ENCODE measurements at regions of chr5 and their contacts with region 1.

Region 1: GRCh38 chr5:32249646-32250045 is 63.1 kb downstream of the MTMR12 start:
- DNase-seq: no peak
- H3K4me3 Mint-ChIP-seq: no peak overlapping the region
- H3K27ac Mint-ChIP-seq: no peak overlapping the region
- H3K4me1 Mint-ChIP-seq: no peaks in the 10 kb centered on the region
- H3K27me3 Mint-ChIP-seq: no peaks in the 10 kb centered on the region

Region 2: DNA sequence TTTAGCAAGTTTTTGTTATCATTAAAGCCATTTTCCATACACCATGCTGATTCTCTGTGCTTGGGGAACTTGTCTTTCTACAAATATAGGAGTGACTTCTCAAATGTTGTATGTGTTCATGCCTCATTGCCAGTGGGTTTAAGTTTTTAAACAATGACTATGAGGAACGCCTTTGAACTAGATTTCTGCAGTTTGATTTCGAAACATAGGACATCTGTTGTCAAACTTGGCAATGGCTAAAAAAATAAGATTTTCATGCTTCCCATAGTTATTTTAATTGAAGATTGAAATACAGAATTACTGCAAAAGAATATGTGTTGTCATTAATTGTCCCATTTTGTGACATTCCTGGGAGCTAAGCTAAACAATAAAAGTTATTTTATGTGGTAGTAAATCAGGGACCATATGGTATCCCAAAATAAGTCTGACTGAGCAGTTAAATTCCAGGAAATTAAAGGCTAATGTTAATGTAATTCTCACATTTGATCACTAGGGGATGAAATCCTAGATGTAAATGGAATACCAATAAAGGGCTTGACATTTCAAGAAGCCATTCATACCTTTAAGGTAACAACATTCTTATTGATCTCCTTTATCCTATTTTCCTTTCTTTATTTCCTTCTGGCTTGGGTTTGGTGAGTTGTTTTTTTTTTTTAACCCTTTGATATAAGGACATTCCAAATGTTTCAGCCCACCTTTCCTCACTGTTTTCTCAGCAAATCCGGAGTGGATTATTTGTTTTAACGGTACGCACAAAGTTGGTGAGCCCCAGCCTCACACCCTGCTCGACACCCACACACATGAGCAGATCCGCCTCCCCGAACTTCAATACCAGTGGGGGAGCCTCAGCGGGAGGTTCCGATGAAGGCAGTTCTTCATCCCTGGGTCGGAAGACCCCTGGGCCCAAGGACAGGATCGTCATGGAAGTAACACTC is 192.2 kb before region 1 on chr5:
- CTCF ChIA-PET with region 1: no interaction called
- intact Hi-C with region 1: no loop called
- DNase-seq: no peak
- H3K4me3 Mint-ChIP-seq: no peak overlapping the region
- H3K27ac Mint-ChIP-seq: no peak overlapping the region
- H3K4me1 Mint-ChIP-seq: no peaks in the 10 kb centered on the region
- H3K27me3 Mint-ChIP-seq: no peaks in the 10 kb centered on the region

Region 3: GRCh38 chr5:32232441-32233219 is 17.0 kb before region 1 on chr5:
- CTCF ChIA-PET with region 1: interaction called, 22 read pairs
- intact Hi-C with region 1: no loop called
- DNase-seq: peak; percentile 88
- H3K4me3 Mint-ChIP-seq: no peak overlapping the region
- H3K27ac Mint-ChIP-seq: no peak overlapping the region
- H3K4me1 Mint-ChIP-seq: peaks cover 7% of the 10 kb centered on the region
- H3K27me3 Mint-ChIP-seq: no peaks in the 10 kb centered on the region

Region 4: GRCh38 chr5:32444431-32445286 is 195.0 kb after region 1 on chr5 and contains the start of gene ZFR:
- CTCF ChIA-PET with region 1: no interaction called
- intact Hi-C with region 1: no loop called
- DNase-seq: peak; percentile 93
- H3K4me3 Mint-ChIP-seq: peak within 1 kb of the TSS; percentile 93
- H3K27ac Mint-ChIP-seq: peak within 1 kb of the TSS; percentile 96
- H3K4me1 Mint-ChIP-seq: peaks cover 27% of the 10 kb centered on the region
- H3K27me3 Mint-ChIP-seq: no peaks in the 10 kb centered on the region
- total RNA-seq, gene ZFR: 50.9 to 52.1 TPM

Region 5: GRCh38 chr5:32628048-32628803 is 378.6 kb after region 1 on chr5:
- CTCF ChIA-PET with region 1: no interaction called
- intact Hi-C with region 1: no loop called
- DNase-seq: no peak
- H3K4me3 Mint-ChIP-seq: no peak overlapping the region
- H3K27ac Mint-ChIP-seq: no peak overlapping the region
- H3K4me1 Mint-ChIP-seq: no peaks in the 10 kb centered on the region
- H3K27me3 Mint-ChIP-seq: no peaks in the 10 kb centered on the region

Measured in activated naive CD4-positive, alpha-beta T cell treated with anti-CD3 and anti-CD28 coated beads for 36 hours (primary cell).